ENCODE measurements at regions of chr14 and their contacts with region 1.

Region 1: DNA sequence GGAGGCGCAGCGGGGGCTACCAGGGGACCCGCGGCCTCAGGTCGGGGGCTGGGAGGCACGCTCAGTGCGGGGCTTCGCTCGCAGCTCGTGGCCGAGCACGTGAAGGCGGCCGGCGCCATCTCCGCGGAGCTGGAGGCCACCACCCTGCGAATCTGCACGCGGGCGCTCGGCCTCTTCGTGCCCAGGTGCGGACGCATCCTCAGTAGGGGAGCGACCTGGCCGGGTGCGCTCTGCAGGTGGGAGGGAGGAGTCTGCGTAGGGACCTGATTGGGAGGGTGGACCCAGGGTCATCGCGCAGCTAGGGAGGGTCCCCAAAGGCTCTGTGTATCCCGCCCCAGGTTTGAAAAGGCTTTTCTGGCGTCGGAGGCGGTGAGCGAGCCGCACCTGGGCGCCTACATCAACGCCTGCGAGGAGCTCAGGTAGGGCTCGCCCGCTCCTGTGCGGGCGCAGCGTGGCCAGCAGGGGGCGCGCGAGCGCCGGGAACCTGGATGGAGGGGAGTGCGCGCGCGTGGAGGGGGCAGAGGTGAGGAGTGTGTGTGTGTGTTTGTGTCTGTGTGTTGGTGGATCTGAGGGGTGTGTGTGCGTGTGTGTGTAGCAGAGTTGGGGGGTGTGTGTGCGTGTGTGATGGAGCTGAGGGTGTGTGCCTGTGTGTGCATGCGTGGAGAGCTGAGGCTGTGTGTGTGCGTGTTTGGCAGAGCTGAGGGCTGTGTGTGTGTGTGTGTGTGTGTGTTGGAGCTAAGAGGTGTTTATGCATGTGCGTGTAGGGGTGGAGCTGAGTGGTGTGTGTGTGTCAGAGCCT is 10.3 kb downstream of the EXOC3L4 start:
- DNase-seq: peak; percentile 84
- ATAC-seq: peak; percentile 74
- H3K4me3 ChIP-seq: peak overlapping the region in 1 of 5 experiments; percentile 19
- H3K4me3 Mint-ChIP-seq: peak overlapping the region; percentile 32
- H3K27ac ChIP-seq: no peak overlapping the region
- H3K27ac Mint-ChIP-seq: peak overlapping the region; percentile 56
- H3K4me1 ChIP-seq: peaks cover 43 to 46% of the 10 kb centered on the region in 2 donors
- H3K4me1 Mint-ChIP-seq: peaks cover 30% of the 10 kb centered on the region
- H3K27me3 ChIP-seq: peaks cover 0 to 47% (median 17%) of the 10 kb centered on the region in 4 experiments
- H3K27me3 Mint-ChIP-seq: peaks cover 20% of the 10 kb centered on the region
- CTCF ChIP-seq: peak; percentile 80

Region 2: GRCh38 chr14:103078093-103078749 is 26.6 kb before region 1 on chr14:
- CTCF ChIA-PET with region 1: interaction called, 35 read pairs
- POLR2A ChIA-PET with region 1: no interaction called
- intact Hi-C with region 1: loop called (anchors 1 kb)
- DNase-seq: peak; percentile 86
- ATAC-seq: peak; percentile 71
- H3K4me3 ChIP-seq: no peak overlapping the region
- H3K4me3 Mint-ChIP-seq: no peak overlapping the region
- H3K27ac ChIP-seq: no peak overlapping the region
- H3K27ac Mint-ChIP-seq: no peak overlapping the region
- H3K4me1 ChIP-seq: peaks cover 10 to 22% of the 10 kb centered on the region in 2 donors
- H3K4me1 Mint-ChIP-seq: peaks cover 5% of the 10 kb centered on the region
- H3K27me3 ChIP-seq: peaks cover 0 to 11% (median 5%) of the 10 kb centered on the region in 4 experiments
- H3K27me3 Mint-ChIP-seq: no peaks in the 10 kb centered on the region
- CTCF ChIP-seq: peak; percentile 80

Region 3: DNA sequence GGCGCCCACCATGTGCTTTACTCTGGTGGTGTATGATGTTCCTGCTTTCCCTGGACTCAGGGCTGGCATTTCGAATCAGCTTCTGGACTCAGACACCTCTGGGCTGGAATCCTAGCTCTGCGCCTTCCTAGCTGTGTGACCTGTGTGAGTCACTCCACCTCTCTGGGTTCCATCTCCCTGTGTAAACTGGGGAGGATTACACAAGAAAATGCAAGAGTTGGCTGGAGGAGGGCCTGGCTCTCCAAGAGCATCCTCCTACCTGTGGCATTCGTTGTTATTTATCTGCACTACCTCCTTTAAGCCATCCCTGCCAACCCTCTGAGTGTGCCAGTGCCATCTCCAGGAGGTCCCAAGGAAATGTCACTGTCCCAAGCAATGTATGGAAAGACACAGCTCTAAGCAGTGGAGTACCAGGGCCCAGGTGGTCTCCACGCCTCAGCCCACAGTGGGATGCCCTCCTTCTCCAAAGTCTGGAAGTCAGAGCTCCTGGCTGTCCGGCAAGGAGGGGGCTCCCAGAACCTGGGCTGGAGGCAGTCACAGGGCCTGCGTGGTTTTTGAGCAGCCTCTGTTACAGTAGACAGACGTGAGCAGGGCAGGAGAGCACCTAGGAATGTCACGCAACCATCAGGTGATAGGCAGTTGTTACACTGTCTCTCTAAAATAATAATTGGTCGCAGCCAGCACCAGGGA is 11.2 kb after region 1 on chr14:
- CTCF ChIA-PET with region 1: interaction called, 22 read pairs
- POLR2A ChIA-PET with region 1: interaction called, 4 read pairs
- intact Hi-C with region 1: no loop called
- DNase-seq: no peak
- ATAC-seq: no peak
- H3K4me3 ChIP-seq: no peak overlapping the region
- H3K4me3 Mint-ChIP-seq: no peak overlapping the region
- H3K27ac ChIP-seq: no peak overlapping the region
- H3K27ac Mint-ChIP-seq: no peak overlapping the region
- H3K4me1 ChIP-seq: peaks cover 8 to 18% of the 10 kb centered on the region in 2 donors
- H3K4me1 Mint-ChIP-seq: peaks cover 21% of the 10 kb centered on the region
- H3K27me3 ChIP-seq: peaks cover 0 to 5% (median 0%) of the 10 kb centered on the region in 4 experiments
- H3K27me3 Mint-ChIP-seq: peaks cover 8% of the 10 kb centered on the region
- CTCF ChIP-seq: no peak

Region 4: GRCh38 chr14:103185051-103185992 is 80.5 kb after region 1 on chr14:
- CTCF ChIA-PET with region 1: interaction called, 61 read pairs
- POLR2A ChIA-PET with region 1: no interaction called
- intact Hi-C with region 1: no loop called
- DNase-seq: peak; percentile 49
- ATAC-seq: no peak
- H3K4me3 ChIP-seq: no peak overlapping the region
- H3K4me3 Mint-ChIP-seq: no peak overlapping the region
- H3K27ac ChIP-seq: no peak overlapping the region
- H3K27ac Mint-ChIP-seq: no peak overlapping the region
- H3K4me1 ChIP-seq: peaks cover 3 to 14% of the 10 kb centered on the region in 2 donors
- H3K4me1 Mint-ChIP-seq: peaks cover 12% of the 10 kb centered on the region
- H3K27me3 ChIP-seq: peaks cover 0 to 30% (median 19%) of the 10 kb centered on the region in 4 experiments
- H3K27me3 Mint-ChIP-seq: peaks cover 45% of the 10 kb centered on the region
- CTCF ChIP-seq: peak; percentile 82

Region 5: DNA sequence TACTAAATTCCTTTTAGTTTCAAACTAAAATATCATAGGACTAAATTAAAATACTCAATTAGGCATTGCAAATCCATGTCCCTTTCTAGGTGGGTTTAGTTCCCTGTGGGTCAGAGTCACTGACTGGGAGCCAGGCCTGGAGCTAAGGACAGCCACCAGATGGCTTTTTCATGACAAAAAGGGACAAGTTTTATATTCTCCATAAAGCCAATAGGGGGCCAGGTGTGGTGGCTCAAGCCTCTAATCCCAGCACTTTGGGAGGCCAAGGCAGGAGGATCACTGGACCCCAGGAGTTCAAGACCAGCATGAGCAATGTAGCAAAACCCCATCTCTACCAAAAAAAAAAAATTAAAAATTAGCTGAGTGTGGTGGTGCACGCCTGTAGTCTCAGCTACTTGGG is 193.8 kb after region 1 on chr14:
- CTCF ChIA-PET with region 1: interaction called, 70 read pairs
- POLR2A ChIA-PET with region 1: no interaction called
- intact Hi-C with region 1: loop called (anchors 1 kb)
- DNase-seq: no peak
- ATAC-seq: no peak
- H3K4me3 ChIP-seq: no peak overlapping the region
- H3K4me3 Mint-ChIP-seq: no peak overlapping the region
- H3K27ac ChIP-seq: no peak overlapping the region
- H3K27ac Mint-ChIP-seq: no peak overlapping the region
- H3K4me1 ChIP-seq: no peaks in the 10 kb centered on the region
- H3K4me1 Mint-ChIP-seq: no peaks in the 10 kb centered on the region
- H3K27me3 ChIP-seq: peaks cover 0 to under 1% (median 0%) of the 10 kb centered on the region in 4 experiments
- H3K27me3 Mint-ChIP-seq: no peaks in the 10 kb centered on the region
- CTCF ChIP-seq: no peak